Activated CD4-positive, alpha-beta memory T cell treated with anti-CD3 and anti-CD28 coated beads, Interleukin-2, amount 10 ng/mL, durations not matched to agents 7 days and 5 days (primary cell): ENCODE measurements at regions of chr1 and their contacts with region 1.

Region 1: GRCh38 chr1:161201828-161202725 is at the start of gene NDUFS2:
- DNase-seq: peak; percentile 97
- H3K4me3 Mint-ChIP-seq: peak within 1 kb of the TSS; percentile 92
- H3K27ac Mint-ChIP-seq: peak within 1 kb of the TSS; percentile 96
- H3K4me1 Mint-ChIP-seq: peaks cover 81% of the 10 kb centered on the region
- H3K27me3 Mint-ChIP-seq: no peaks in the 10 kb centered on the region
- total RNA-seq, gene NDUFS2: 83.0 to 87.3 TPM

Region 2: DNA sequence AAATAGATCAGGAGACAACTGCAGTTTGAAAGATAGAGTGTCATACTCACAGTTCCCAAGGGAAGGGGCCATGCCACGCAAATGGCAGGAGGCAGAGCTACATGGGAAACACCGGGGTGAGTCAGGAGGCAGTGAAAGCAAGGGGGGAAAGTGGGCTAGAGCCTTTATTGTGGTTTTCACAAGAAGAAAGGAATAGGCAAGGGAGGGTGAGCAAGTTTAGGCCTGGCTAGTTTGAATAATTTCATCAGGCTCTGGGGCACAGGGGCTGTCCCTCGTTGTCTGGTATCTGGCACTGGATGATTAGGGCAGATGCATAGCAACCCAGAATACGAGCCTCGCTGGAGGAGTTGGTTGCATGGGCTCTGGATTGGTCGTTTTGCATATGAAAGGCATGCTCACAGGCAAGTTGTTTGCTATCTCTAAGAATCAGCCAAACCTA is 230.4 kb before region 1 on chr1:
- CTCF ChIA-PET with region 1: no interaction called
- POLR2A ChIA-PET with region 1: no interaction called
- DNase-seq: no peak
- H3K4me3 Mint-ChIP-seq: no peak overlapping the region
- H3K27ac Mint-ChIP-seq: no peak overlapping the region
- H3K4me1 Mint-ChIP-seq: no peaks in the 10 kb centered on the region
- H3K27me3 Mint-ChIP-seq: peaks cover 9% of the 10 kb centered on the region

Region 3: DNA sequence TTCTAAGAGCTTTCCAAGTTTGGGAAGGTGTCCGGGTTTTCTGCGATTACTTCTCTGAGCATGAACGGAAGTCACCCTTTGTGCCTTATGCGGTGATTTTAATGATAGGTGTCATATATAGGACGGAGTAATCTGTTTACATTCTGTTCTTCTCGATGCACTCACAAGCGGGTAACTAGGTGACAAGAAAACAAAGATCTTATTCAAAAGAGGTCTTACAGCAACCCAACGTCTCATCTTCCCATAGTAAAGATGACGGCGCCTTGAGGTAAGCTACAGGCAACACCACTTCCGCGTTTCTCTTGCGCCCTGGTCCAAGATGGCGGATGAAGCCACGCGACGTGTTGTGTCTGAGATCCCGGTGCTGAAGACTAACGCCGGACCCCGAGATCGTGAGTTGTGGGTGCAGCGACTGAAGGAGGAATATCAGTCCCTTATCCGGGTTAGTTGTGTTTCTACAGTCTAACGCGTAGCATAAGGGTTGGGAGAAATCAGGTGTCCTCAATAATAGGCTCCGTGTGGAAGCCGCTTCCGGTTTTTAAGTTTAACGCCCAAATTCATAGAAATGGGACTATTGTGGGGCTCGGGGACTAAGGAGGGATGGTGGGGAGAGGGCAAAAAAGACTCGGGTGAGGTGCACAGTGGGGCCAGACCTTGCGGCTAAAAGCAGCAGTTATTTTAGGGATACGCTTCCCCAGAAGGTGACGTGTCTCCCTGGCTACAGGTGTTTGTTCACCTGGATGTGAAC is 48.2 kb before region 1 on chr1 and contains the start of gene UFC1:
- CTCF ChIA-PET with region 1: no interaction called
- POLR2A ChIA-PET with region 1: interaction called, 20 read pairs
- DNase-seq: peak; percentile 85
- H3K4me3 Mint-ChIP-seq: peak within 1 kb of the TSS; percentile 92
- H3K27ac Mint-ChIP-seq: peak within 1 kb of the TSS; percentile 98
- H3K4me1 Mint-ChIP-seq: peaks cover 30% of the 10 kb centered on the region
- H3K27me3 Mint-ChIP-seq: no peaks in the 10 kb centered on the region
- total RNA-seq, gene UFC1: 103 to 113 TPM

Region 4: GRCh38 chr1:161177112-161177935 is 24.8 kb before region 1 on chr1 and contains the start of gene B4GALT3:
- CTCF ChIA-PET with region 1: interaction called, 24 read pairs
- POLR2A ChIA-PET with region 1: interaction called, 91 read pairs
- DNase-seq: peak; percentile 94
- H3K4me3 Mint-ChIP-seq: peak within 1 kb of the TSS; percentile 97
- H3K27ac Mint-ChIP-seq: peak within 1 kb of the TSS; percentile 96
- H3K4me1 Mint-ChIP-seq: peaks cover 78% of the 10 kb centered on the region
- H3K27me3 Mint-ChIP-seq: no peaks in the 10 kb centered on the region
- total RNA-seq, gene B4GALT3: 55.0 to 56.7 TPM

Region 5: DNA sequence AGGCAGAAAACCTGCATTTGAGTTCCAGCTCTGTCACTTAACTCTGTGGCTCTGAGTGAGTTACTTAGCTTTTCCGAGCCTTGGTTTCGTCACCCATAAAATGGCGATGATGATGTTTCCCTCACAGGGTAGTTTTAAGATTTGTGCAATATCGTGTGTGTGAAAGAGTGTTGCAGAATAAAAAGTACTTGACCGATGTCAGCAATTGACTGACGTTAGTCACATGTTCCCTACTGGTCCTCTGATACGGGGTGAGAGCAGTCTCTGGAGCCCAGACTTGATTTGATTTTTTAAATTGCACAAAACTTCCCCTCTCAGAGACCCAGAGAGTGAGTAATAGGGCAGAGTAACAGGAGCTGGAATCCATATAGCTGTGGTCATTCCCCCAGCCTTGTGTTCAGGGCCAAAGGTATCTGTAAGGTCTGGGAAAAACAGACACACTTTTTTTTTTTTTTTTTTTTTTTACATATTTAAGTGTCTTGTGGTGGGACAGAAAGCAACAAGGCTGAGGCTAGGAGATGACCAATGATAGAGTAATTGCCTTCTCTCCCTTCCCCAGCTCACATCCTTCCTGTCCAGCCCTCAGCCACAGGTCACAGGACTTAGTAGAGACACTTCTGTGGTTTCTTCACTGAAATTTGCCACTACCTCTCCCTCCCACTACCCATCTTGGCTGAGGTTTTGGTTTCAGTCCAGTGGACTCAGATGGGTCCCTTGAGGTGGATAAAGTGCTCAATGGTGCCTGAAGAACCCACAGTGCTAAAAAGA is 15.1 kb after region 1 on chr1:
- CTCF ChIA-PET with region 1: interaction called, 5 read pairs
- POLR2A ChIA-PET with region 1: interaction called, 44 read pairs
- DNase-seq: no peak
- H3K4me3 Mint-ChIP-seq: no peak overlapping the region
- H3K27ac Mint-ChIP-seq: peak overlapping the region; percentile 7
- H3K4me1 Mint-ChIP-seq: peaks cover 43% of the 10 kb centered on the region
- H3K27me3 Mint-ChIP-seq: no peaks in the 10 kb centered on the region

Region 6: DNA sequence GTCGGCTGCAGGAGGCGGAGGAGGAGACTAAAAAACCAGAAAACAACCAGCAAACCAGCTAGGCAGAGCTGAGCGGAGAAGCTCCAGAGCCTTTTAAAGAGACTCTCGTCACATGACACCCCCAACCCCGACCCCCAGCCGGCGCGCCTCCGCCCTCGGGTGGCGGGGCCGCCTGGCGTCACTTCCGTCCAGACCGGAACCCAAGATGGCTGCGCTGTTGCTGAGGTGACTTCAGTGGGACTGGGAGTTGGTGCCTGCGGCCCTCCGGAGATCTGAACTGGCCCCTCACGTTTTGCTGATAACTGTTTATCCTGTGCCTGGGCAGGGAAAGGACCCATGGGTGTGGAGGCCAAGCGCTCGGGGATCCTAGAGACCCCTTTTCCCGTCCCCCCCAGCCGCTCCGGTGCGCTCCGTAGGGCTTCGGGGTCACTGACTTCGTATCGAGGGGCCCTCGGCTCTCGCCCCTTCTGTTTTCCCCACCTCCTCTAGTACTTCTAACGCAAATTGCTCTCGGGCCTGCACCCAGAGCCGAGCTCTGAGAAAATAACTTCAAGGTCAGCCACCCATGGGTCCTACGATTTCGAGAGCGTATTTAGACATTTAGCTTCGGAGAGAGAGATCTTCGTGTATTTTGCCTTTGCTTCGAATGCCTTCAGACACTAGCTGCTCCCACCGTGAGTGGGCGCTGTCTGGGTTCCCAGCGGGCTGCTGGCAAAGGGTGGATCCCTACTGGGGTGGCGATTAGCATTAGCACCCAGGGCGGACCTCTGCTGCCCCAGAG is 112.3 kb after region 1 on chr1 and contains the start of gene SDHC:
- CTCF ChIA-PET with region 1: interaction called, 3 read pairs
- POLR2A ChIA-PET with region 1: interaction called, 10 read pairs
- DNase-seq: peak; percentile 91
- H3K4me3 Mint-ChIP-seq: peak within 1 kb of the TSS; percentile 93
- H3K27ac Mint-ChIP-seq: peak within 1 kb of the TSS; percentile 95
- H3K4me1 Mint-ChIP-seq: peaks cover 20% of the 10 kb centered on the region
- H3K27me3 Mint-ChIP-seq: peaks cover 3% of the 10 kb centered on the region
- total RNA-seq, gene SDHC: 172 to 173 TPM

Region 7: GRCh38 chr1:161389691-161390558 is 187.8 kb after region 1 on chr1:
- CTCF ChIA-PET with region 1: interaction called, 4 read pairs
- POLR2A ChIA-PET with region 1: interaction called, 14 read pairs
- DNase-seq: peak; percentile 96
- H3K4me3 Mint-ChIP-seq: peak overlapping the region; percentile 91
- H3K27ac Mint-ChIP-seq: peak overlapping the region; percentile 94
- H3K4me1 Mint-ChIP-seq: peaks cover 43% of the 10 kb centered on the region
- H3K27me3 Mint-ChIP-seq: no peaks in the 10 kb centered on the region